A673 (cell line): ENCODE measurements at regions of chr1 and their contacts with region 1.

Region 1: DNA sequence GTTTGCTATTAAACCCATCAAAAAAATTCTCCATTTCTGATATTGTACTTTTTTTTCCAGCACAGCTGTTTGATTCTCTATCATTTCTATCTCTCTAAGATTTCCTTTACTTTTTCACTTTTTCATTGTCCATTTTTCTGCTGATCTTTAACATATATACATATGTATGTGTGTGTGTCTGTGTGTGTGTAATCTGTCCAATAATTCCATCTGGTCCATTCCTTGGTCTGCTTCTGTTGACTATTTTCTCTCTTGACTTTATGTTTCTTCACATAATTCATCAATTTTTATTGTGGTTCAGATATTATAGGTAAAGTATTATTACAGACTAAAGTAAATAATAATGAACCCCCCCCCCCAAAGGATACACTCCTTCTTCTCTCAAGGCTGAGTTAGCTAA is 84.2 kb downstream of the RGS7 start:
- DNase-seq: no peak
- H3K4me3 ChIP-seq: no peak overlapping the region
- H3K27ac ChIP-seq: no peak overlapping the region
- H3K4me1 ChIP-seq: no peaks in the 10 kb centered on the region
- H3K27me3 ChIP-seq: peaks cover 2% of the 10 kb centered on the region
- CTCF ChIP-seq: no peak

Region 2: GRCh38 chr1:241171991-241172390 is 100.8 kb before region 1 on chr1:
- CTCF ChIA-PET with region 1: no interaction called
- POLR2A ChIA-PET with region 1: no interaction called
- intact Hi-C with region 1: no loop called
- DNase-seq: no peak
- H3K4me3 ChIP-seq: no peak overlapping the region
- H3K27ac ChIP-seq: no peak overlapping the region
- H3K4me1 ChIP-seq: no peaks in the 10 kb centered on the region
- H3K27me3 ChIP-seq: no peaks in the 10 kb centered on the region
- CTCF ChIP-seq: no peak

Region 3: DNA sequence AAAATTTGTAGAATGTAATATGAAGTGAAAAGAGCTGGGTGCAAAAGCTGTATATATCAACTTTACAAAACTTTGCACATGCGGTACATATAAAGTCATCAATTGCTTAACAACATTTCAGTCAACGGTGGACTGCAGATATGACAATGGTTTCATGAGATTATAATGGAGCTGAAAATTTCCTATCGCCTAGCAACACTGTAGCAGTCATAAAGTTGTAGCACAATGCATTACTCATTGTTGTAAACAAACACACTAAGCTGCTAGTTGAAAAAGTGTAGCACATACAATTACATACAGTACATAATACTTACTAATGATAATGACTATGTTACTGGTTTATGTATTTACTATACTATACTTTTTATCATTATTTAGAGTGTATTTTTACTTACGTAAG is 20.1 kb after region 1 on chr1:
- CTCF ChIA-PET with region 1: interaction called, 15 read pairs
- POLR2A ChIA-PET with region 1: no interaction called
- intact Hi-C with region 1: no loop called
- DNase-seq: no peak
- H3K4me3 ChIP-seq: no peak overlapping the region
- H3K27ac ChIP-seq: no peak overlapping the region
- H3K4me1 ChIP-seq: no peaks in the 10 kb centered on the region
- H3K27me3 ChIP-seq: no peaks in the 10 kb centered on the region
- CTCF ChIP-seq: no peak